Body of pancreas (tissue), 4 donors: ENCODE measurements at regions of chr5 and their contacts with region 1.

Region 1: DNA sequence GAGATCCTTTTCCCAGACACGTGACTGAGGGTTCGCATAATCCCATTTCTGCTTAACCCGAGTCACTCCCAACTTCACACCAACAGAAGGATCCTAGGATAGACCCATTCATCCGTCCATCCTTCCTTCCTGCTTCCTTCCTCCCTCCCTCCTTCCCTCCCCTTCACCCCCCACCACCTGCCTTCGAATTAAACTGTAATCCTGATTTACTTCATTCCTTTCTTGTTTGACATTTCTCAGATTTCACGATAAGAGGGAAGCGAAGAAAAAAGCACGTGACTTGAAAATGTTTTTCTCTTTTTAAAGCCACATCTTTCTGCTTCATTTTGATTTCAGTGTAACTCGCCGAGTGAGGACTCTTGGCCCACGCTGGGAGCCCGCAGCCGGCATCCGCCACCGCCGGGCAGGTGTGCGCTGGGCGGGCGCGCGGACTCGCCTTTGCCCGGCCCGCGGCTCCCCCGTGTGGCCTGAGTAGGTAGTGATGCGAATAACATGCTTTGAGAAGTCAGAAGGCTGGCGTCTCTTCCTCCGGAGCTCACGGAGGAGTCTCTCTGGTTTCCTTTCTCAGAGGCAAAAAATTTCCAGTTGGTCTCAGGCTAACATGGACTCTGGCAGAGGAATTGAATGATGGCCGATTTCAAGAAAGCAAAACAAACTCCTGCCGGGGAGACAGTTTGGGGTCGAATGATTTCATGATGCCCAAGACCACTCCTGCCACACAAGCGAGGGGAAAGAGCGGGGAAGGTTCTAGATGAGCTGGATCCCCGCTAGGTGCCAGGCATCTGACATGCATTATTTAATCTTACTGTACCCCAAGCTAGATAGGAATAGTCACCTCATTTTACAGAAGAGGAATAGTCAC is 117.7 kb downstream of the SLC12A2 start:
- DNase-seq: peak; percentile 84 to 93 (median 87)
- ATAC-seq: peak; percentile 96
- H3K4me3 ChIP-seq: no peak overlapping the region
- H3K27ac ChIP-seq: no peak overlapping the region
- H3K4me1 ChIP-seq: peaks cover 25% of the 10 kb centered on the region
- H3K27me3 ChIP-seq: no peaks in the 10 kb centered on the region
- CTCF ChIP-seq: peak; percentile 73 to 96 (median 88)
- POLR2A ChIP-seq: no peak

Region 2: GRCh38 chr5:127567026-127567768 is 634.1 kb before region 1 on chr5:
- intact Hi-C with region 1: loop called (anchors 5 kb)
- DNase-seq: no peak
- ATAC-seq: no peak
- H3K4me3 ChIP-seq: no peak overlapping the region
- H3K27ac ChIP-seq: no peak overlapping the region
- H3K4me1 ChIP-seq: no peaks in the 10 kb centered on the region
- H3K27me3 ChIP-seq: no peaks in the 10 kb centered on the region
- CTCF ChIP-seq: no peak
- POLR2A ChIP-seq: no peak

Region 3: DNA sequence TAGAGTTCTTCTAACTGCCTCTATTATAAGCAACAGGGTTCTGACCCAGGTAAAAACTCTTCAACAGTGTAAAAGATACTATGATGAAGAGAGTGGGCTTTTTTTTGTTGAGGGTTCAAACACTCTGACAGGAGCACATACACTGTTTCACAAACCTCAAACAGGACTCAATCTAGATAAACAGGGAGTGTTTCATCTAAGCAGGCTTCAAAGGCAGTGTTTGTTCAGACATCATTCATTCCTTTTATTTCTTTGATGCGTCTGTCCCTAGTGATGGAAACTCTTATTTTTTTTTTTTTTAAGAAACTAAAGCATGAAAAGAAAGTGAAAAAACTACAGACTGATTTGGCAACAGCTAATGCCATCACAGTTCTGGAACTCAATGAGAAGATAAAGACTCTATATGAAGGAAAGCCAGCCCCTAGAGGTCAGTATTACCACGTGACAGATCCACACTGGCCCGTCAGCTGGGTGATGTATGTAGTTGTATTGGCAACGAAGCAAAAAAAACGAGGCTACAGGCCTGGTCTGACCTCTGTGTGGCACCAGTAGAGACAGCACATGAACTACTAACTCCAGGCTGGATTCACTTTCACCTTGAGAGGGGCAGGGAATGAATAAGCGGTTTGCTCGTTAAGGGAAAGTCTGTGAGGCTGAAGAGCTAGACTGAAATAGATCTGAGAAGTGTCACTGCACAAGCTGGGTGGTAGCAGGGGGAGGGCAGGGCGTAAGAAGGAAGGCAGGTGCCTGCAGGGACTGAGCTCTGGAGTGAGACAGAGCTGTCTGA is 325.9 kb before region 1 on chr5:
- intact Hi-C with region 1: loop called (anchors 10 kb)
- DNase-seq: peak; percentile 38 to 68 (median 65)
- ATAC-seq: peak; percentile 79
- H3K4me3 ChIP-seq: no peak overlapping the region
- H3K27ac ChIP-seq: peak overlapping the region in 2 of 4 donors; percentile 14 to 47
- H3K4me1 ChIP-seq: peaks cover 10% of the 10 kb centered on the region
- H3K27me3 ChIP-seq: no peaks in the 10 kb centered on the region
- CTCF ChIP-seq: peak in 4 of 7 experiments; percentile 38 to 53 (median 44)
- POLR2A ChIP-seq: no peak